CD8-positive, alpha-beta T cell (primary cell): ENCODE measurements at regions of chr5 and their contacts with region 1.

Region 1: GRCh38 chr5:36870399-36871040 is 6.0 kb upstream of the NIPBL start:
- DNase-seq: peak in 2 of 9 experiments; percentile 73 to 82
- ATAC-seq: peak; percentile 75
- H3K4me3 ChIP-seq: no peak overlapping the region
- H3K4me3 Mint-ChIP-seq: no peak overlapping the region
- H3K27ac ChIP-seq: no peak overlapping the region
- H3K27ac Mint-ChIP-seq: peak overlapping the region; percentile 20
- H3K4me1 ChIP-seq: peaks cover 25% of the 10 kb centered on the region
- H3K4me1 Mint-ChIP-seq: peaks cover 46% of the 10 kb centered on the region
- H3K27me3 ChIP-seq: no peaks in the 10 kb centered on the region
- H3K27me3 Mint-ChIP-seq: no peaks in the 10 kb centered on the region
- CTCF ChIP-seq: peak; percentile 67

Region 2: GRCh38 chr5:36744773-36745589 is 125.5 kb before region 1 on chr5:
- CTCF ChIA-PET with region 1: interaction called, 8 read pairs
- POLR2A ChIA-PET with region 1: interaction called, 4 read pairs
- intact Hi-C with region 1: loop called in 1 of 2 experiments (anchors 1 kb)
- DNase-seq: peak in 6 of 9 experiments; percentile 22 to 51 (median 26)
- ATAC-seq: peak; percentile 62
- H3K4me3 ChIP-seq: peak overlapping the region; percentile 37 to 74
- H3K4me3 Mint-ChIP-seq: peak overlapping the region; percentile 86
- H3K27ac ChIP-seq: no peak overlapping the region
- H3K27ac Mint-ChIP-seq: no peak overlapping the region
- H3K4me1 ChIP-seq: peaks cover 6% of the 10 kb centered on the region
- H3K4me1 Mint-ChIP-seq: peaks cover 16% of the 10 kb centered on the region
- H3K27me3 ChIP-seq: no peaks in the 10 kb centered on the region
- H3K27me3 Mint-ChIP-seq: peaks cover 43% of the 10 kb centered on the region
- CTCF ChIP-seq: no peak

Region 3: GRCh38 chr5:38167562-38167996 is 1297.1 kb after region 1 on chr5:
- CTCF ChIA-PET with region 1: no interaction called
- POLR2A ChIA-PET with region 1: no interaction called
- intact Hi-C with region 1: no loop called
- DNase-seq: no peak
- ATAC-seq: no peak
- H3K4me3 ChIP-seq: no peak overlapping the region
- H3K4me3 Mint-ChIP-seq: no peak overlapping the region
- H3K27ac ChIP-seq: no peak overlapping the region
- H3K27ac Mint-ChIP-seq: no peak overlapping the region
- H3K4me1 ChIP-seq: no peaks in the 10 kb centered on the region
- H3K4me1 Mint-ChIP-seq: no peaks in the 10 kb centered on the region
- H3K27me3 ChIP-seq: no peaks in the 10 kb centered on the region
- H3K27me3 Mint-ChIP-seq: no peaks in the 10 kb centered on the region
- CTCF ChIP-seq: no peak